GM12878 (cell line): ENCODE measurements at regions of chr7 and their contacts with region 1.

Region 1: GRCh38 chr7:130896898-130897514 is 163.0 kb upstream of the KLF14 start:
- DNase-seq: no peak
- ATAC-seq: peak; percentile 83
- H3K4me3 ChIP-seq: no peak overlapping the region
- H3K27ac ChIP-seq: no peak overlapping the region
- H3K4me1 ChIP-seq: peaks cover 51% of the 10 kb centered on the region
- H3K27me3 ChIP-seq: no peaks in the 10 kb centered on the region
- CTCF ChIP-seq: peak; percentile 75 to 87 (median 83)
- EP300 ChIP-seq: no peak
- POLR2A ChIP-seq: peak; percentile 57; the same call in 1 of the 2 replicates
- RAD21 ChIP-seq: peak; percentile 89

Region 2: GRCh38 chr7:130875265-130875741 is 21.7 kb before region 1 on chr7:
- CTCF ChIA-PET with region 1: interaction called, 33 read pairs
- POLR2A ChIA-PET with region 1: interaction called, 4 read pairs
- RAD21 ChIA-PET with region 1: interaction called, 3 read pairs
- SMC1A ChIA-PET with region 1: interaction called, 4 read pairs
- in situ Hi-C with region 1: no loop called
- intact Hi-C with region 1: no loop called
- DNase-seq: no peak
- ATAC-seq: peak; percentile 90
- H3K4me3 ChIP-seq: no peak overlapping the region
- H3K27ac ChIP-seq: no peak overlapping the region
- H3K4me1 ChIP-seq: no peaks in the 10 kb centered on the region
- H3K27me3 ChIP-seq: no peaks in the 10 kb centered on the region
- CTCF ChIP-seq: peak; percentile 70 to 94 (median 88)
- EP300 ChIP-seq: no peak
- POLR2A ChIP-seq: peak; percentile 57; the same call in 1 of the 2 replicates
- RAD21 ChIP-seq: peak; percentile 88

Region 3: DNA sequence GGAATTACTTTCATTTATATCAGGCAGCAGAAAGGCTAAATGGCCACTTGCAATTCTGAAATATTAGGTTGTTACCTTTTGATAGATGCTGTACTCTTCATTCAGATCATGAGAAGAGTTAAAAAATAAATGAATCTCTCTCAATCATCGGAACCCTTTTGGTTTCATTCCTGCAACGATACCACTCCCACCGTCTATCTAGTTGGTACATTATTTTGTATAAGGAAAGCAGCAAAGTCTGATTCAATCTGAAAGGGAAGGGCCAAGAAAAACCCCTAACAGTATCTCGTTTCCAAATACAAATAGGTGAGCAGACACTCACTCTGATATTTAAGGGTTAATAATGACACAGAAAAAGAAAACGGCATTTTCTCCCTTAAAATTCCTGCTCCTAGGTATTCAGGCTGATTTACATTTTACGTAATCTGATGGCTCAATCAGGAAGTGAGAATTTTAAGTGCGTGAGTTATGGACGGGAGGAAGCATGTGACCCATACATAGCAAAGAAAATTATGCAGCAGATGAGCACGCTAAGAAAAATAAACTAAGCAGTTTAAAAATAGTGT is 46.4 kb after region 1 on chr7:
- CTCF ChIA-PET with region 1: interaction called, 17 read pairs
- POLR2A ChIA-PET with region 1: interaction called, 3 read pairs
- RAD21 ChIA-PET with region 1: interaction called, 13 read pairs
- SMC1A ChIA-PET with region 1: interaction called, 13 read pairs
- in situ Hi-C with region 1: no loop called
- intact Hi-C with region 1: no loop called
- DNase-seq: no peak
- ATAC-seq: peak; percentile 22
- H3K4me3 ChIP-seq: peak overlapping the region; percentile 39
- H3K27ac ChIP-seq: peak overlapping the region; percentile 78
- H3K4me1 ChIP-seq: peaks cover 36% of the 10 kb centered on the region
- H3K27me3 ChIP-seq: no peaks in the 10 kb centered on the region
- CTCF ChIP-seq: no peak
- EP300 ChIP-seq: peak in 1 of 2 experiments; percentile 43; a peak in 2 of 4 replicates
- POLR2A ChIP-seq: no peak
- RAD21 ChIP-seq: no peak

Region 4: DNA sequence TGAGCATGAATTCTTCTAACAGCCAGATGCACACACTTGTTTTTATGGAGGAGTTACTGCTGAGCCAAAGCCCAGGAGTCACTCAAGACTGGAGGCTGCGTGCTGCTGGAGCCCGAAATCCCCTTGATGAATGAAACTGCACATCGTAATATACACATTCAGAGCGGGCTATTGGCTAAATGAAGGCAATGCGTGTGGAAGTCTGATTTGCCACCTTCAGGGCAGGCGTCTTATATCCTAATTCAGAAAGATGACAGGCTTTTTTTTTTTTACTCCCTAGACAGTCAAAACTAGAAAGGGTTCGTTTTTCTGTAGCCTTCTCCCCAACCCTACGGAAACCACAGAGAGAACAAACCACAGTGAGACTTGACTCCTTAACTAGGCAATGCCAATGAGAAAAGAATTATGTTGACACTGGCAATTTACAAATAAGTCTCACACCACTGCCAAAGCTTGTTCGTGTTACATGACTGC is 64.2 kb after region 1 on chr7:
- CTCF ChIA-PET with region 1: interaction called, 40 read pairs
- POLR2A ChIA-PET with region 1: interaction called, 6 read pairs
- RAD21 ChIA-PET with region 1: interaction called, 21 read pairs
- SMC1A ChIA-PET with region 1: interaction called, 50 read pairs
- in situ Hi-C with region 1: no loop called
- intact Hi-C with region 1: no loop called
- DNase-seq: peak; percentile 98
- ATAC-seq: peak; percentile 82
- H3K4me3 ChIP-seq: peak overlapping the region; percentile 72
- H3K27ac ChIP-seq: peak overlapping the region; percentile 93
- H3K4me1 ChIP-seq: peaks cover 17% of the 10 kb centered on the region
- H3K27me3 ChIP-seq: no peaks in the 10 kb centered on the region
- CTCF ChIP-seq: no peak
- EP300 ChIP-seq: peak; percentile 90 to 91
- POLR2A ChIP-seq: peak; percentile 95
- RAD21 ChIP-seq: no peak

Region 5: GRCh38 chr7:130996841-130997231 is 99.8 kb after region 1 on chr7:
- CTCF ChIA-PET with region 1: interaction called, 105 read pairs
- POLR2A ChIA-PET with region 1: no interaction called
- RAD21 ChIA-PET with region 1: interaction called, 4 read pairs
- SMC1A ChIA-PET with region 1: interaction called, 16 read pairs
- in situ Hi-C with region 1: no loop called
- intact Hi-C with region 1: no loop called
- DNase-seq: no peak
- ATAC-seq: peak; percentile 45
- H3K4me3 ChIP-seq: no peak overlapping the region
- H3K27ac ChIP-seq: no peak overlapping the region
- H3K4me1 ChIP-seq: peaks cover 18% of the 10 kb centered on the region
- H3K27me3 ChIP-seq: no peaks in the 10 kb centered on the region
- CTCF ChIP-seq: no peak
- EP300 ChIP-seq: no peak
- POLR2A ChIP-seq: no peak; the same call in 1 of the 2 replicates
- RAD21 ChIP-seq: no peak

Region 6: GRCh38 chr7:131021460-131021859 is 124.5 kb after region 1 on chr7:
- CTCF ChIA-PET with region 1: interaction called, 10 read pairs
- POLR2A ChIA-PET with region 1: interaction called, 8 read pairs
- RAD21 ChIA-PET with region 1: interaction called, 7 read pairs
- SMC1A ChIA-PET with region 1: interaction called, 3 read pairs
- in situ Hi-C with region 1: no loop called
- intact Hi-C with region 1: no loop called
- DNase-seq: no peak
- ATAC-seq: peak; percentile 78
- H3K4me3 ChIP-seq: peak overlapping the region; percentile 33
- H3K27ac ChIP-seq: peak overlapping the region; percentile 80
- H3K4me1 ChIP-seq: peaks cover 40% of the 10 kb centered on the region
- H3K27me3 ChIP-seq: no peaks in the 10 kb centered on the region
- CTCF ChIP-seq: no peak
- EP300 ChIP-seq: peak in 1 of 2 experiments; percentile 17; a peak in 1 of 4 replicates
- POLR2A ChIP-seq: no peak; the same call in 1 of the 2 replicates
- RAD21 ChIP-seq: no peak

Region 7: DNA sequence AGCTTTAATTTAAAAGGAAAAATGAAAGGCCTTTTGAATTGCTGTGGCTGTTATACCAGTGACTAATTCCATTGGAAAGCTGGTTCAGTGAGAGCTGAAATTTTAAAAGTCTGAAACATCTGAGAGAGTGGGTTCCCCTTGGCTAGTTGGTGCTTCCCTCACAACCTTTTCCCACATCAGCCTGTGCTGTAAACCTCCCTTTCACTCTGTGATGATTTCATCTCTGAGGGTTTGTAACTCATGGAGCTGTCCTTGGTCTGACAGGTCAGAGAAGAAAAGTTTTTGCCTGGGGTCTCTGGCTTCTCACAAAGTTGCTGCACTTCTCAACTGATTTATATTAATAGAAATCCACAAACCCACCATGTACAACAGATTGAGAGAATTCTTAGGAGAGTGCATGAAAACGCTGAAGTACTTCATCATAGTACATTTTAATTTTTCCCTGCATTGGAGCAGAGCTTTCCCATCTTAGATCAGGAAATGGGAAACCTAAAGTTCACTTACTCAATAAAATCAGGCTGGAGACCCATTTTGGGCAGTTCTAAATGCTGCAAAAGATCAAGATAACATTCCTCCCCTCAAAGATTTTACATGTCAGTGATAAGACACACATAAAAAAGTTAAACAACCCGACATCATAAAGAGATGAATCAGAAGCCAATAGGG is 273.6 kb after region 1 on chr7:
- CTCF ChIA-PET with region 1: no interaction called
- POLR2A ChIA-PET with region 1: no interaction called
- RAD21 ChIA-PET with region 1: no interaction called
- SMC1A ChIA-PET with region 1: no interaction called
- in situ Hi-C with region 1: no loop called
- intact Hi-C with region 1: no loop called
- DNase-seq: no peak
- ATAC-seq: no peak
- H3K4me3 ChIP-seq: no peak overlapping the region
- H3K27ac ChIP-seq: no peak overlapping the region
- H3K4me1 ChIP-seq: no peaks in the 10 kb centered on the region
- H3K27me3 ChIP-seq: no peaks in the 10 kb centered on the region
- CTCF ChIP-seq: no peak
- EP300 ChIP-seq: no peak
- POLR2A ChIP-seq: no peak
- RAD21 ChIP-seq: no peak